ENCODE measurements at regions of chr6 and their contacts with region 1.

Region 1: GRCh38 chr6:44221291-44221960 is 2.0 kb upstream of the SLC29A1 start:
- DNase-seq: peak; percentile 90
- H3K4me3 ChIP-seq: no peak overlapping the region; a peak in 1 of 4 replicates
- H3K27ac ChIP-seq: peak overlapping the region; percentile 52 to 98
- H3K4me1 ChIP-seq: peaks cover 17 to 65% of the 10 kb centered on the region in 2 experiments
- H3K27me3 ChIP-seq: no peaks in the 10 kb centered on the region
- CTCF ChIP-seq: peak; percentile 83
- EP300 ChIP-seq: no peak
- RAD21 ChIP-seq: peak; percentile 76

Region 2: DNA sequence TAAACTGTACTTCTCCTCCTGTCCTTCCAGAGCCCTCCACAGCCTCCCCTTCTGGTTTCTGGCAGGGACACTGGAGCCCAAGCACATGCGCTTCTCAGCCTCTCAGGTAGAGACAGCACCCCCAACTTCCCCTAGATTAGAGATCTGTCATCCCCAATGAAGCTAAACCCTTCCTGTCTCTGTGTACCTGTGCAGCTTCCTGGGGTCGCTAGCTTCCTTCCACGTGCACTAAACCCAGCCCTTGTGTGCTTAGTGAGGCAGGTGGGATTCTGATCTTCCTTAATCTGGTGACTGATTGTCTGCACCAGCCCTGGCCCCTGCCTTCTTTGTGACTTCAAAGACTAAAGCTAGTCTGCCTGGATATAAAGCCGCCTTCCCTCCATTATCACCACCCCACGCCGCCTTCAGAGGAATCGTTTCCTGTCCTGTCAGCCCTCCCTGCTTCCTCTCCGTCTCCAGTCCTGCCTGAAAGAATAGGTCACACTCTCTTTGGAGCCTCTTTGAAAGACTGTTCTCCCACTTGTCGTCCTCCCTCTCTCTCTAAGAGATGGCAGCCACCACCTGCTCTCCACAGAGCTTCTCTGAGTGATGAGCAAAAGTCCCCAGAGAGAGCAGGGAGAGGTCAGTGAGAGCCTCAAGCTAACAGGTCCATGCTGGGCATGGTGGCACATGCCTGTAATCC is 35.3 kb before region 1 on chr6:
- CTCF ChIA-PET with region 1: interaction called, 13 read pairs
- POLR2A ChIA-PET with region 1: interaction called, 3 read pairs
- DNase-seq: no peak
- H3K4me3 ChIP-seq: no peak overlapping the region
- H3K27ac ChIP-seq: no peak overlapping the region
- H3K4me1 ChIP-seq: no peaks in the 10 kb centered on the region
- H3K27me3 ChIP-seq: no peaks in the 10 kb centered on the region; the same call in 1 of the 2 replicates
- CTCF ChIP-seq: no peak
- EP300 ChIP-seq: no peak
- RAD21 ChIP-seq: no peak

Region 3: GRCh38 chr6:44246663-44247337 is 25.4 kb after region 1 on chr6 and contains the start of gene HSP90AB1:
- CTCF ChIA-PET with region 1: interaction called, 54 read pairs
- POLR2A ChIA-PET with region 1: interaction called, 49 read pairs
- DNase-seq: peak; percentile 94
- H3K4me3 ChIP-seq: peak within 1 kb of the TSS; percentile 65 to 99
- H3K27ac ChIP-seq: peak within 1 kb of the TSS; percentile 86
- H3K4me1 ChIP-seq: peaks cover 13 to 24% of the 10 kb centered on the region in 2 experiments; a peak in 3 of 4 replicates
- H3K27me3 ChIP-seq: no peaks in the 10 kb centered on the region
- CTCF ChIP-seq: no peak
- EP300 ChIP-seq: peak in 1 of 2 experiments; percentile 50; a peak in 1 of 4 replicates
- RAD21 ChIP-seq: no peak
- polyA plus RNA-seq, gene HSP90AB1: 843 and 1,069 TPM in 2 replicates